HEK293 (cell line): ENCODE measurements at regions of chr6 and their contacts with region 1.

Region 1: GRCh38 chr6:122033539-122034181 is 365.8 kb upstream of the HSF2 start:
- H3K4me3 ChIP-seq: no peak overlapping the region
- H3K27ac ChIP-seq: no peak overlapping the region
- H3K4me1 ChIP-seq: no peaks in the 10 kb centered on the region
- CTCF ChIP-seq: peak; percentile 45; the same call in 1 of the 2 replicates

Region 2: GRCh38 chr6:121055572-121056163 is 978.0 kb before region 1 on chr6:
- CTCF ChIA-PET with region 1: interaction called, 12 read pairs
- POLR2A ChIA-PET with region 1: no interaction called
- H3K4me3 ChIP-seq: no peak overlapping the region
- H3K27ac ChIP-seq: no peak overlapping the region
- H3K4me1 ChIP-seq: no peaks in the 10 kb centered on the region
- CTCF ChIP-seq: peak; percentile 34; the same call in 1 of the 2 replicates

Region 3: DNA sequence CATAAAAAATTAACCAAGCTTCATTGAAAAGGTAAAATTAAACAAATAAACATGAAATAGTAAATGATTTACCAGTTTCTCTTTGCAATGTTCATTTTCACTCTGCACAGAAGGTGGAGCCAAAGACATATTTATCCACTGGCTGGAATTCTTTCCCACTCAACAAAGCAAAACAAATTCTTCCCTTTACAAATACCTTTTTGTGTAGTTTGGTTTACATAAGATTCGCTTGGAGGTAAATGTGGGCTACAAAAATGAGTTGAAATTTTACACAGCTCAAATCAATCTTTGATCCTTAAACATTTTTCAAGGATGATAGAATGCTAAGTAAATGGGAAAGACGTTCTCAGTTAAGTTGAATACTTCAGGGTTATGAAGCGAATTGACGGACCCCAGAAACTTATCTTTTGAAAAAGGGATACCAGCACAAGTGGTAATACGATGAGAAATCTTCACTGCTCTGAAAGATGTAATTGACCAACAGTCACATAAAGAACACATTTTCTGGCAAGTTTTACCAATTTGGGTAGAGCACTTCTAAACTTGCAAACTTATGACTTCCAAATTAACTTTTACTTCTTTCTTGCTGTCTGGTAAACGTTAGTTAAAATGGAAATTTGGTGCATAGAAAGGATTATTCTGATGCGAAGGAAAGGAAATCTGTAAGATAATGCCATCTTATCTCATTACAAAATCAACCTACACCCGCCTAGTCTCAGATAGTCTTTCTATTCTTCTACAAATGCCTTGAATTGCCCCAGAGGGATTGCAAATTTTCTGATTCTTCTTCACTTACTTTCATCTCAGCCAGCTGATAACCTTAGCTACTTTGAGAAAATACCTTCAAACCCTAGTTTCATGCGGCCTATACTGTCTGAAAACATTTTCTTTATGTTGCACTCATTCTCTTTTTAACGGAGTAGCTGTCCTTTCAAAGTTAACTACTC is 602.9 kb before region 1 on chr6:
- CTCF ChIA-PET with region 1: interaction called, 35 read pairs
- POLR2A ChIA-PET with region 1: interaction called, 5 read pairs
- H3K4me3 ChIP-seq: no peak overlapping the region
- H3K27ac ChIP-seq: no peak overlapping the region
- H3K4me1 ChIP-seq: no peaks in the 10 kb centered on the region
- CTCF ChIP-seq: 0 out of 2 replicates have a peak, but pooled peaks have one; percentile 35

Region 4: GRCh38 chr6:121436960-121437850 is 596.5 kb before region 1 on chr6:
- CTCF ChIA-PET with region 1: interaction called, 35 read pairs
- POLR2A ChIA-PET with region 1: no interaction called
- H3K4me3 ChIP-seq: peak overlapping the region; percentile 53
- H3K27ac ChIP-seq: peak overlapping the region; percentile 67
- H3K4me1 ChIP-seq: peaks cover 3% of the 10 kb centered on the region; the same call in 1 of the 2 replicates
- CTCF ChIP-seq: no peak

Region 5: DNA sequence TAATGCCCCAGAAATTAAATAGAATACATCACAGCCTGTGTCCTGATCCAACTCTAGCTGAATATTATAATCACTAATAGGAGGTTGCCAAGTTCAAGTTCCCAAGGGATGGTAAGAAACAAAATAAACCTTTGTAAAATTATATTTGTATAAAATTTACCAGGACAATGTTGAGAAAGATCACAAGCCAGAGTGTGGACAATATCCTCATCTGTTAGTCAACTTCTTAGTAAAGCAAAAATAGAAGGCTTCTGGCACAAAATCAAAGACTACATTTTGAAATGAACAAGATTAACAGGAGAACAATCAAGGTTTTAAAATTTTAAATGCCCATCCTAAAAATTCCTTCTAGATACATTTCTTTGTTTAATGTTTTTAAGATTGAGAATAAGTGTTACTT is 75.4 kb after region 1 on chr6:
- CTCF ChIA-PET with region 1: interaction called, 10 read pairs
- POLR2A ChIA-PET with region 1: no interaction called
- H3K4me3 ChIP-seq: no peak overlapping the region
- H3K27ac ChIP-seq: no peak overlapping the region
- H3K4me1 ChIP-seq: no peaks in the 10 kb centered on the region
- CTCF ChIP-seq: no peak

Region 6: GRCh38 chr6:122184401-122184827 is 150.8 kb after region 1 on chr6:
- CTCF ChIA-PET with region 1: interaction called, 10 read pairs
- POLR2A ChIA-PET with region 1: no interaction called
- H3K4me3 ChIP-seq: no peak overlapping the region
- H3K27ac ChIP-seq: no peak overlapping the region
- H3K4me1 ChIP-seq: no peaks in the 10 kb centered on the region
- CTCF ChIP-seq: no peak; the same call in 1 of the 2 replicates